ENCODE measurements at regions of chr11 and their contacts with region 1.

Region 1: GRCh38 chr11:45771566-45772448 is 33.1 kb upstream of the SLC35C1 start:
- H3K4me3 ChIP-seq: peak overlapping the region; percentile 39
- H3K27ac ChIP-seq: no peak overlapping the region
- H3K4me1 ChIP-seq: no peaks in the 10 kb centered on the region
- CTCF ChIP-seq: peak; percentile 79

Region 2: GRCh38 chr11:45347348-45348082 is 424.3 kb before region 1 on chr11:
- CTCF ChIA-PET with region 1: interaction called, 34 read pairs
- POLR2A ChIA-PET with region 1: no interaction called
- H3K4me3 ChIP-seq: no peak overlapping the region
- H3K27ac ChIP-seq: no peak overlapping the region
- H3K4me1 ChIP-seq: no peaks in the 10 kb centered on the region
- CTCF ChIP-seq: no peak

Region 3: GRCh38 chr11:45371251-45372115 is 400.3 kb before region 1 on chr11:
- CTCF ChIA-PET with region 1: interaction called, 97 read pairs
- POLR2A ChIA-PET with region 1: no interaction called
- H3K4me3 ChIP-seq: no peak overlapping the region
- H3K27ac ChIP-seq: no peak overlapping the region
- H3K4me1 ChIP-seq: no peaks in the 10 kb centered on the region
- CTCF ChIP-seq: peak; percentile 36; the same call in 1 of the 2 replicates

Region 4: DNA sequence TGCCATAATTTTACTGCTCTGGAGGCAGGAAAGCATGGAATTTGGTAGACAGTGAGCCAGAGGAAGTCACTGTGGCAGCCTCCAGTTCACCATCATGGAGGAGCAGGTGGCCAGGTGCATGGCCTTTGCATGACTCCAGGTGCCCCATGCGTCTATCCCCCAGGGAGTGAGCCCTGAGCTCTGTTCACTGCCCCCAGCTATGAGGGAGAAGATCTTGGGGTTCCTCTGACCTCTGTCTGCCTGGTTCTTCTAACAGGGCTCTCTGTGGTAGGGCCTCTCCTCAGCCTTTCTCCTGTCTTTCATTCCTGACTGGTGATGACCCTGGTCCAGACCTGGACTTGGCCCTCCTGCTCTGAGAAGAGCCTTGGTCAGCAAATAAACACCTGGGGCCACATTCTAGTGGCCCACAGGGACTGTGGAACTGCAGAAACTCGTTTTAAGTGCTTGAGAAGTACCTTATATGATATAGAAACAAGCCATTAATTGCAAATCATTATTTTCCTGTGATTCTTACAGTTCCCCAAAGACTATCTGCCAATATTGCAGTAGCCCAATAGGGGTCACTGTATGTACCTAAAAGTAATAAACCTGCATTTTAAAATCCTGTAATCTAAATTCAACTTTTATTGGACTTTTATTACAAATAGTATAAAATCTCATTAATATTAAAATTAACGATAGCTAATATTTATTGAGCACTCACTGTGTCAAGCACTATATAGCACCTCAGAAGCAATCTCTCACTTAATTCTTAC is 365.7 kb before region 1 on chr11:
- CTCF ChIA-PET with region 1: interaction called, 10 read pairs
- POLR2A ChIA-PET with region 1: no interaction called
- H3K4me3 ChIP-seq: no peak overlapping the region
- H3K27ac ChIP-seq: no peak overlapping the region
- H3K4me1 ChIP-seq: no peaks in the 10 kb centered on the region
- CTCF ChIP-seq: no peak

Region 5: GRCh38 chr11:45670386-45671135 is 101.2 kb before region 1 on chr11:
- CTCF ChIA-PET with region 1: no interaction called
- POLR2A ChIA-PET with region 1: no interaction called
- H3K4me3 ChIP-seq: no peak overlapping the region
- H3K27ac ChIP-seq: no peak overlapping the region
- H3K4me1 ChIP-seq: no peaks in the 10 kb centered on the region
- CTCF ChIP-seq: no peak

Region 6: DNA sequence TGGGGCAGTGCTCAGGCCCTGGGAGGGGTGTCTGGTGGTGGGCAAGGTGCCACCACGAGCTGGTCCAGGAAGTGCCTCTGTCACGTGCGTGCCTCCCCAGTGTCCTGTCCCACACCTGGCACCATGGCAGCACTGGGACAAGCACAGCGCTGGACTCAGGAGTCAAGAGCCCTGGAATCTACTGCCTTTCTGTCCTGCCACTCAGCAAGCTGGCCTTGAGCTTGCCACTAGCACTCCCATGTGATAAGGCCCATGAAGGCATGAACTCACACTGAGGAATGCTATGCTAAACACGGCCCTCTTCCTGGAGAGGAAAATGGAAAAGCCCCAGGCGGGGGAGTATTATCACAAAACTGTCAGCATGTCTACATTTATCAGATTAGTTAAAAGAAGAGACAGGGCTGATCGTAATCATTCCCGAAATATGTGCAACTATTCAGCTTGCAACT is 17.5 kb before region 1 on chr11:
- CTCF ChIA-PET with region 1: interaction called, 14 read pairs
- POLR2A ChIA-PET with region 1: no interaction called
- H3K4me3 ChIP-seq: no peak overlapping the region
- H3K27ac ChIP-seq: no peak overlapping the region
- H3K4me1 ChIP-seq: no peaks in the 10 kb centered on the region
- CTCF ChIP-seq: no peak